ENCODE measurements at regions of chr1 and their contacts with region 1.

Region 1: DNA sequence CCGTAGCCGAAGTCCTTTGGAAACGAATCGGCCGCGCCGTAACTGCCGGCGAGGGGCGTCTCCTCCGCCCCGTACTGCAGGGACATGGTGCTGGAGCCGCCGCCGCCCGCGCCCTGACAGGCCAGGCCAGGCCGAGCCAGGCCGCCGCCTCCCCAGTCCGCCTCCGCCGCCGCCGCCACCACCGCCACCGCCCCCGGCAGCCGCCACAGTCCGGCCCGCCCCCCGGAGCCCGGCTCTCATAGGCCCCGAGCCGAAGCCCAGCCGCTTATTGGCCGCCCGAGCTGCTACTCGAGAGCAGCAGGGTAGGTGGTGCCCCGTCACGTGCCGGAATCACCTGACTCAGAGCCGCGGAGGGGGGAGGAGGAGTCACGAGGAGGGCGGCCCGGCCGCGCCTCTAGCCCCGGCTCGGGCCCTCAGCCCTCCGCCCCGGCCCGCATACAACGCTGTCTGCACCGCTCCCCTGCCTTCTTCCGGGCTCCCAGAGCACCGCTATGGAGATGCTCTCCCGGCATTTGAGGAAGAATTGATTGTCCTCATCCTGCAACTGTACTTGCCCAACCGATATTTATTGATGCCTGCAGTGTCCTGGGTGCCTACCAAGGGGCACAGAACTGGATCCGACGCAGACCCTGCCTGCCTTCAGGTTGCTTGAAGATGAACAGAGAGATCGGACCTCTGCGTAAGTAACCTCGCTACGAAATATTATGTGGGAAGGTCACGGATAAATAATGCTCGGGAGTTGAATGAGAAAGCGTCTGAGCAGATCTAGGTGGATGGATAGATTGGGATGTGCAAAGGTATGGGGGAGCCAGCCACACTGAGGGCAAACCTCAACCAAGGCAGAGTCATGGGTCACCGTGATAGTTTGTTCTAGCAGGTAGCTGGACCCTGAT is at the start of gene RRAGC:
- DNase-seq: peak; percentile 98
- H3K4me3 Mint-ChIP-seq: peak within 1 kb of the TSS; percentile 92
- H3K27ac Mint-ChIP-seq: peak within 1 kb of the TSS; percentile 82
- H3K4me1 Mint-ChIP-seq: peaks cover 23% of the 10 kb centered on the region
- H3K27me3 Mint-ChIP-seq: no peaks in the 10 kb centered on the region
- total RNA-seq, gene RRAGC: 13.3 and 14.2 TPM in 2 replicates

Region 2: GRCh38 chr1:38671221-38671620 is 188.6 kb before region 1 on chr1:
- intact Hi-C with region 1: no loop called
- DNase-seq: no peak
- H3K4me3 Mint-ChIP-seq: no peak overlapping the region
- H3K27ac Mint-ChIP-seq: no peak overlapping the region
- H3K4me1 Mint-ChIP-seq: no peaks in the 10 kb centered on the region
- H3K27me3 Mint-ChIP-seq: peaks cover 9% of the 10 kb centered on the region

Region 3: GRCh38 chr1:38873027-38873969 is 13.5 kb after region 1 on chr1 and contains the start of gene MYCBP:
- intact Hi-C with region 1: loop called (anchors 1 kb)
- DNase-seq: peak; percentile 98
- H3K4me3 Mint-ChIP-seq: peak within 1 kb of the TSS; percentile 88
- H3K27ac Mint-ChIP-seq: peak within 1 kb of the TSS; percentile 75
- H3K4me1 Mint-ChIP-seq: peaks cover 29% of the 10 kb centered on the region
- H3K27me3 Mint-ChIP-seq: no peaks in the 10 kb centered on the region
- total RNA-seq, gene MYCBP: 31.7 and 34.9 TPM in 2 replicates

Region 4: DNA sequence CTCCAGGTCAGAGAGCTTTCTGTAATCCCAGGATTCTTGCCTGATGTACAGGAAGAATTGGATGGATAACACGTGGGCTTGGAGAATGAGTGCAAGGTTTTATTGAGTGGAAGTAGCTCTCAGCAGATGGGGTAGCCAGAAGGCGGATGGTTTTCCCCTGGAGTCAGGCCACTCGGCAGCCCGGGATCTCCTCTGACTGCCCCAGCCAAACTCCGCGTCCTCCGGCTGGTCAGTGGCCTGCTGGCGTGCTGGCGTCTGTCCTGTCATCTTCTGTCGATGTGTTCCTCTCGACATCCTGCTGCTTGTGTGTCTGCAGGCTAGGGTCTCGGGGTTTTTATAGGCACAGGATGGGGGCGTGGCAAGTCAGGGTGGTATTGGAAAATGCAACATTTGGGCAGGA is 49.0 kb after region 1 on chr1:
- intact Hi-C with region 1: no loop called
- DNase-seq: no peak
- H3K4me3 Mint-ChIP-seq: no peak overlapping the region
- H3K27ac Mint-ChIP-seq: no peak overlapping the region
- H3K4me1 Mint-ChIP-seq: no peaks in the 10 kb centered on the region
- H3K27me3 Mint-ChIP-seq: no peaks in the 10 kb centered on the region

Region 5: DNA sequence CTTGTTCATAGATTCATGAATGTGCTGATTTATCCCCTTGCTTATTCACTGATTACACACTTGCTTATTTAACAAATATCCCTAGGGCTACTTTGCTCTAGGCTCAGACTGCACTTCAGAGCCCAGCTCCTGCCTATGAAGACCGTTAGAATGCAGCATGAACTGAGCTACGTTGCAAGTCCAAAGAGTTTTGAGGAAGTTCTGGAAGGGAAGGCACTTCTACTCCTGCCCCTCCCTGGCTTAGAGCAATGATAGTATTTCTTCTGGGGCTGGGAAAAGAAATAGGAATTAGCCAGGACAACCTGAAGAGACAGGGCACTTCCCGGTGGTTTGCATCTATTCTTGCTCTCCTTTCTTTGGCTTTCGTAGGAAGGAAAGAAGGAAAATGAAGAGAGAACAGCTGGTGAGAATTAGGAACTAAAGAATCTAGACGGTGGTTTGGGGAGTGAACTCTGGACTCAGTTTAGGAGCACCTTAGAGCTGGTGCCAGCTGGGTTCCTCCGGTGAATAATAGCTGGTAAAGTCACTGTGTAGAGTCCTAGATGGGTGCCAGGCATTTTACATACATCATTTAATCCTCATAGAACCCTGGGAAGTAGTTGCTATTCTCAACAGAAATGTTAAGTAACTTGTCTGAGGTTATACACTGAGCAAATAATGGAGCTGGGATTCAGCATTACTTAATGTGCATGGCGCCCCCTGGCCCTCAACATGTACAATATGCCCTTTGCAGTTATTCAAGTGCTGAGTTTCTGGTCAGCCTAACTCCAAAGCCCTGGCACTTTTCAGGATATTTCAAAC is 232.2 kb after region 1 on chr1:
- intact Hi-C with region 1: loop called (anchors 5 kb)
- DNase-seq: peak; percentile 33
- H3K4me3 Mint-ChIP-seq: no peak overlapping the region
- H3K27ac Mint-ChIP-seq: no peak overlapping the region
- H3K4me1 Mint-ChIP-seq: peaks cover 4% of the 10 kb centered on the region
- H3K27me3 Mint-ChIP-seq: peaks cover 5% of the 10 kb centered on the region

Region 6: GRCh38 chr1:39214998-39215873 is 355.4 kb after region 1 on chr1:
- intact Hi-C with region 1: no loop called
- DNase-seq: no peak
- H3K4me3 Mint-ChIP-seq: peak overlapping the region; percentile 89
- H3K27ac Mint-ChIP-seq: peak overlapping the region; percentile 93
- H3K4me1 Mint-ChIP-seq: peaks cover 41% of the 10 kb centered on the region
- H3K27me3 Mint-ChIP-seq: no peaks in the 10 kb centered on the region